ENCODE measurements at regions of chr7 and their contacts with region 1.

Region 1: DNA sequence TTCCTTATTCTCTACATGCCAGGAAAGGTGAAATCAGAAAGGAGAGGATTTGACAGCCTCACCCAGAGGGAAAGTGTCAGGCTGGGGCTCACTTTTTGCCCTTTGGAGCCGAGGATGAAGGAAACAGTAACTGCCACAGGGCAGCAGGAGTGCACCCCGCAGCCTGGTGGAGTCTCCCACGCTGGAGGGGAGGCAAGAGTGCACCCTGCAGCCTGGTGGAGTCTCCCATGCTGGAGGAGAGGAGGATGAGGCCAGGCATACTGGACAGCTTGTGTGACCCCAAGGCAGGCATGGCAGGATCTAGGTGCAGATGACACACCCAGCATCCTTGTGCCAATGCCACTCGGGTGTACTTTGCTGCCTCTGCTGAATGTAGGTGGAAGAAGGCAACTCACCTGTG is 484.0 kb downstream of the DNAJB6 start:
- DNase-seq: no peak
- H3K4me3 ChIP-seq: no peak overlapping the region
- H3K27ac ChIP-seq: no peak overlapping the region
- H3K4me1 ChIP-seq: no peaks in the 10 kb centered on the region
- H3K27me3 ChIP-seq: no peaks in the 10 kb centered on the region
- CTCF ChIP-seq: no peak

Region 2: GRCh38 chr7:157874870-157875229 is 54.1 kb after region 1 on chr7:
- CTCF ChIA-PET with region 1: no interaction called
- dilution Hi-C with region 1: loop called (anchors 5 kb)
- in situ Hi-C with region 1: no loop called
- intact Hi-C with region 1: no loop called
- DNase-seq: no peak
- H3K4me3 ChIP-seq: no peak overlapping the region
- H3K27ac ChIP-seq: no peak overlapping the region
- H3K4me1 ChIP-seq: no peaks in the 10 kb centered on the region
- H3K27me3 ChIP-seq: no peaks in the 10 kb centered on the region
- CTCF ChIP-seq: no peak

Measured in mammary epithelial cell (primary cell).